Posterior vena cava (tissue), 2 donors: ENCODE measurements at regions of chr1 and their contacts with region 1.

Region 1: GRCh38 chr1:199667089-199667488 is 360.4 kb upstream of the NR5A2 start:
- DNase-seq: no peak

Region 2: DNA sequence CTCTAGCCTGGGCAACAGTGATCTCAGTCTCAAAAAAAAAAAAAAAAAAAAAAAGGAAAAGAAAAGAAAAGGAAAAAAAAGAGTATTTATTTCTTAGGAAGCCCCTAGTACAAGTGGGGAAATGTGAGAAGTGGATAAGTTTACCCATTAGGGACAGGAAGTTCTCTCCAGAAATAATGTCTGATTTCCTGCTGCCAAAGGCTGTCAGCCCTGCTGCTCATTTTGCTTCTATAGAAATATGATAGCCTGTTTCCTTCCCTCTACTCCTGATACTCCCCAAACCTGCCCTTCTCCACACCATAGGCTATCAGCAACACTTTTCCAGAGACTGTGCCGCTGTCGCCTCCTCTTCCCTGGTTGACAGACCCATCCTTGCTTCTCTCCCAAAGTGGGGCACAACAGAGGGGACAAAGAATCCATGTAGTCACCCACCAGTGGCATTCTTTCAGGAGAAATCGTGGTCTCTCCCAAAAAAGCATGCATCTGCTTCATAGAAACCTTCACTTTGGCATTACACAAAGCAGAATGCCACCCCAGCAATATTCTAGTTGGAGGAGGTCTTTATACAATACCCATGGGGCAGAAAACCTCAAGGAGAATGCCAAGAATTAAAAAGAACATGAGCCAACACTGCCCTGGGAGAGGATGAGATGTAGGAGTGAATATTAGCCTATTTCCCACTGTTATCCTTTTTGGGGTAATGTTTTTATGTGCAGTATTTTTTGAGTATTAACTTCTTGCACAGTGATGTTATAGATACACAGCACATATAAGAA is 194.1 kb after region 1 on chr1:
- intact Hi-C with region 1: loop called in 1 of 2 experiments (anchors 5 kb)
- DNase-seq: no peak